Activated CD8-positive, alpha-beta memory T cell treated with anti-CD3 and anti-CD28 coated beads, Interleukin-2, amount 10 ng/mL, durations not matched to agents 7 days and 5 days (primary cell): ENCODE measurements at regions of chr13 and their contacts with region 1.

Region 1: GRCh38 chr13:100514788-100515409 is 73.7 kb downstream of the GGACT start:
- DNase-seq: peak; percentile 83
- ATAC-seq: peak; percentile 97
- H3K4me3 Mint-ChIP-seq: no peak overlapping the region
- H3K27ac Mint-ChIP-seq: no peak overlapping the region
- H3K4me1 Mint-ChIP-seq: peaks cover 32% of the 10 kb centered on the region
- H3K27me3 Mint-ChIP-seq: no peaks in the 10 kb centered on the region

Region 2: GRCh38 chr13:99516153-99516929 is 998.6 kb before region 1 on chr13:
- CTCF ChIA-PET with region 1: no interaction called
- DNase-seq: no peak
- ATAC-seq: no peak
- H3K4me3 Mint-ChIP-seq: no peak overlapping the region
- H3K27ac Mint-ChIP-seq: no peak overlapping the region
- H3K4me1 Mint-ChIP-seq: peaks cover 32% of the 10 kb centered on the region
- H3K27me3 Mint-ChIP-seq: no peaks in the 10 kb centered on the region

Region 3: GRCh38 chr13:99900960-99901359 is 613.9 kb before region 1 on chr13:
- CTCF ChIA-PET with region 1: interaction called, 11 read pairs
- DNase-seq: no peak
- ATAC-seq: peak; percentile 24
- H3K4me3 Mint-ChIP-seq: no peak overlapping the region
- H3K27ac Mint-ChIP-seq: no peak overlapping the region
- H3K4me1 Mint-ChIP-seq: peaks cover 13% of the 10 kb centered on the region
- H3K27me3 Mint-ChIP-seq: peaks cover 67% of the 10 kb centered on the region

Region 4: GRCh38 chr13:99916366-99917103 is 598.4 kb before region 1 on chr13:
- CTCF ChIA-PET with region 1: interaction called, 13 read pairs
- DNase-seq: no peak
- ATAC-seq: peak; percentile 63
- H3K4me3 Mint-ChIP-seq: no peak overlapping the region
- H3K27ac Mint-ChIP-seq: peak overlapping the region; percentile 26
- H3K4me1 Mint-ChIP-seq: peaks cover 40% of the 10 kb centered on the region
- H3K27me3 Mint-ChIP-seq: peaks cover 23% of the 10 kb centered on the region